ENCODE measurements at regions of chr2 and their contacts with region 1.

Region 1: DNA sequence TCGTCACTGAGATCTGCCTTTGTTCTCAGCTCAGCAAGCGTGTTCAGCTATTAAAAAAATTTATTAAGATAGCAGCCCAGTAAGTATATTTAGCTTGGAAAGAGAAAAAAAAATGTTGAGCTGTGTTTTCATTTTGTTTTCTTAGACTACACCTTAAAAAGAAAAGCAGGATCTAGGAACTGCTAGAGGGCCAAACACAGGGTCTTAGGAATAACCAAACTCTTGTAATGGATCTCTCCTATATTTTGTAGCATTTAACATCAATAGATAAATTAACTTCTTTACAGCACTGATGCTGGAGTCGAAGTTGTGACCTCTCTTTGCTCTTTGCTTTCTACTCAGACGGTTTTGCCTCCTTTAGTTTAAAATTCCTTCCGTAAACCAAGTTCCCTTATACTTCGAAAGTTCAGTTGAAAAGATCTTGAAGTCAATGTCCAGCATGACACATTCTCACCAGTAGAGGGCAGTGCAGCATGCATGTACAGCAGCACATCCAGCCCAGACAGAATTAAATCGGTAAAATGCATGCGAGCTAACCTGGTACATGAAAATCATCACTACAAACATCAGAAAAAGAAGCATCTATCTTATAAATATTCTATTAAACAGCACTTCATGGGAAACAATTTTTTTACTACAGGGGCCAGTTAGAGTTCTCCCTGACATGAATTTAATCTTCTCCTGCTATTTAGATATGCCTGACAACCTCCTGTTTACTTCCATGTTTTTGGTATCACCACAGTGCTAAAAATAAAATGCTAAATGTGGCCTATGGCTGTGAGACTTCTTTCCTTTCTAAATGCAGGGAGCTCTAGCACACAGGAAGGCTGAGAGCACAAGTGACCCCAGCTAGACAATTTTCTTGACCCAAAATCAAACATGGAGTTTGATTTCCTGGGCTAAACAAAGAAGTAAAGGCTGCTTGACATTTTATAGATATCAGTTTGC is 48.2 kb upstream of the MAP3K20 start:
- DNase-seq: peak; percentile 70
- H3K4me3 ChIP-seq: peak overlapping the region in 1 of 2 experiments; percentile 12; a peak in 1 of 4 replicates
- H3K27ac ChIP-seq: peak overlapping the region in 1 of 2 experiments; percentile 14; a peak in 2 of 4 replicates
- H3K4me1 ChIP-seq: peaks cover 2 to 6% of the 10 kb centered on the region in 2 experiments; a peak in 2 of 4 replicates
- H3K27me3 ChIP-seq: no peaks in the 10 kb centered on the region
- CTCF ChIP-seq: peak; percentile 98
- EP300 ChIP-seq: no peak
- RAD21 ChIP-seq: peak; percentile 98

Region 2: GRCh38 chr2:172285010-172285621 is 742.3 kb before region 1 on chr2:
- CTCF ChIA-PET with region 1: no interaction called
- POLR2A ChIA-PET with region 1: no interaction called
- DNase-seq: no peak
- H3K4me3 ChIP-seq: no peak overlapping the region
- H3K27ac ChIP-seq: peak overlapping the region in 1 of 2 experiments; percentile 98; a peak in 2 of 4 replicates
- H3K4me1 ChIP-seq: peaks cover 0 to 36% of the 10 kb centered on the region in 2 experiments
- H3K27me3 ChIP-seq: no peaks in the 10 kb centered on the region
- CTCF ChIP-seq: no peak
- EP300 ChIP-seq: no peak
- RAD21 ChIP-seq: no peak

Region 3: DNA sequence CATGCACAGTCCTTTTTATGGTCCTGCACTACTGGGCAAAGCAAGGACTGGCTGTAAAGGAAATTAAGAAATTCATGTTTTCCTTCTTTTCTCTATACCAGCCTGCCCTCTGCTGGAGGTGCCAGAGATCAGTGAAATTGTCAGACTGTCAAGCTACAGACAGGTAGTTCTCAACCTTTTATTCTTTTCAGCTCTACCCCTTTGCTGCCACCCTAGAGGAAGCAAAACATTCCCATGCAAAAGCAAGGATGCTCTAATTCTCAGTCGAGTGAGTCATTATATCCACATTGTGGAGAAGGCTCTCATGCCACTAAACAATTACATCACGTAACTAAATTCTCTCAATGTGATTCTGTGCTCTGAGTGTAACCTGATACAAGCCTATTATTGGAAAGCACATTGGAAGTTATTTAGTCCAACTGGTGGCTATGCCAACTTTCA is 316.9 kb before region 1 on chr2:
- CTCF ChIA-PET with region 1: no interaction called
- POLR2A ChIA-PET with region 1: no interaction called
- DNase-seq: peak; percentile 67
- H3K4me3 ChIP-seq: peak overlapping the region in 1 of 2 experiments; percentile 31; a peak in 1 of 4 replicates
- H3K27ac ChIP-seq: peak overlapping the region in 1 of 2 experiments; percentile 55; a peak in 1 of 4 replicates
- H3K4me1 ChIP-seq: peaks cover 0 to 4% of the 10 kb centered on the region in 2 experiments; a peak in 2 of 4 replicates
- H3K27me3 ChIP-seq: no peaks in the 10 kb centered on the region
- CTCF ChIP-seq: peak; percentile 84
- EP300 ChIP-seq: no peak
- RAD21 ChIP-seq: peak; percentile 88

Region 4: GRCh38 chr2:172813314-172813888 is 214.1 kb before region 1 on chr2:
- CTCF ChIA-PET with region 1: interaction called, 41 read pairs
- POLR2A ChIA-PET with region 1: no interaction called
- DNase-seq: peak; percentile 33
- H3K4me3 ChIP-seq: no peak overlapping the region
- H3K27ac ChIP-seq: peak overlapping the region in 1 of 2 experiments; percentile 89; a peak in 2 of 4 replicates
- H3K4me1 ChIP-seq: peaks cover 0 to 32% of the 10 kb centered on the region in 2 experiments; a peak in 2 of 4 replicates
- H3K27me3 ChIP-seq: no peaks in the 10 kb centered on the region
- CTCF ChIP-seq: peak; percentile 63
- EP300 ChIP-seq: 0 out of 4 replicates have a peak, but pooled peaks of 1 of the 2 experiments have one; percentile 5
- RAD21 ChIP-seq: peak; percentile 92

Region 5: GRCh38 chr2:173010233-173010632 is 17.2 kb before region 1 on chr2:
- CTCF ChIA-PET with region 1: interaction called, 30 read pairs
- POLR2A ChIA-PET with region 1: no interaction called
- DNase-seq: no peak
- H3K4me3 ChIP-seq: no peak overlapping the region
- H3K27ac ChIP-seq: no peak overlapping the region
- H3K4me1 ChIP-seq: no peaks in the 10 kb centered on the region
- H3K27me3 ChIP-seq: no peaks in the 10 kb centered on the region
- CTCF ChIP-seq: no peak
- EP300 ChIP-seq: no peak
- RAD21 ChIP-seq: no peak

Region 6: GRCh38 chr2:173075781-173076580 is 48.5 kb after region 1 on chr2 and contains the start of gene MAP3K20:
- CTCF ChIA-PET with region 1: interaction called, 15 read pairs
- POLR2A ChIA-PET with region 1: no interaction called
- DNase-seq: peak; percentile 86
- H3K4me3 ChIP-seq: peak within 1 kb of the TSS; percentile 85
- H3K27ac ChIP-seq: peak within 1 kb of the TSS; percentile 85 to 88
- H3K4me1 ChIP-seq: peaks cover 3 to 4% of the 10 kb centered on the region in 2 experiments; a peak in 3 of 4 replicates
- H3K27me3 ChIP-seq: no peaks in the 10 kb centered on the region
- CTCF ChIP-seq: peak; percentile 47
- EP300 ChIP-seq: no peak
- RAD21 ChIP-seq: peak; percentile 42
- polyA plus RNA-seq, gene MAP3K20: 8.5 and 12.2 TPM in 2 replicates

Region 7: DNA sequence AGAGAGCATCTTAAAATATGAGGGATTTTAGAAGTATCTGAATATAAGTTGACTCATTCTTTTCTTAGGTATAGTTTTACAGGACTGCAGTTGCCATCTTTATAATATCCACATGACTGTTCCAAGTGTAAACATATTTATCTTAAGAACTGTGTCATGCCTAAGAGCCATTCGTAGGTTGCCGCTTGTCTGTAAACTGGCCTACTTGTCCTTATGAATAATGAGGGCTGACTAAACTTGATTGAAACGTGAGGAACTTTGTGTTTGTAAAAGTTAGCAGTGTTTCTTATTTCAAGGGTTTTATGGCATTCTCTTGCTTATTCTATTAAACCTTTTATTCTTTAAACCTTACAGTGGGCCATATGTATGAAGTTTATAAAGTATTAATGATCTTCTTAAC is 147.8 kb after region 1 on chr2:
- CTCF ChIA-PET with region 1: no interaction called
- POLR2A ChIA-PET with region 1: no interaction called
- DNase-seq: no peak
- H3K4me3 ChIP-seq: no peak overlapping the region
- H3K27ac ChIP-seq: no peak overlapping the region
- H3K4me1 ChIP-seq: peaks cover 0 to 16% of the 10 kb centered on the region in 2 experiments; a peak in 1 of 4 replicates
- H3K27me3 ChIP-seq: no peaks in the 10 kb centered on the region
- CTCF ChIP-seq: no peak
- EP300 ChIP-seq: no peak
- RAD21 ChIP-seq: no peak

Region 8: DNA sequence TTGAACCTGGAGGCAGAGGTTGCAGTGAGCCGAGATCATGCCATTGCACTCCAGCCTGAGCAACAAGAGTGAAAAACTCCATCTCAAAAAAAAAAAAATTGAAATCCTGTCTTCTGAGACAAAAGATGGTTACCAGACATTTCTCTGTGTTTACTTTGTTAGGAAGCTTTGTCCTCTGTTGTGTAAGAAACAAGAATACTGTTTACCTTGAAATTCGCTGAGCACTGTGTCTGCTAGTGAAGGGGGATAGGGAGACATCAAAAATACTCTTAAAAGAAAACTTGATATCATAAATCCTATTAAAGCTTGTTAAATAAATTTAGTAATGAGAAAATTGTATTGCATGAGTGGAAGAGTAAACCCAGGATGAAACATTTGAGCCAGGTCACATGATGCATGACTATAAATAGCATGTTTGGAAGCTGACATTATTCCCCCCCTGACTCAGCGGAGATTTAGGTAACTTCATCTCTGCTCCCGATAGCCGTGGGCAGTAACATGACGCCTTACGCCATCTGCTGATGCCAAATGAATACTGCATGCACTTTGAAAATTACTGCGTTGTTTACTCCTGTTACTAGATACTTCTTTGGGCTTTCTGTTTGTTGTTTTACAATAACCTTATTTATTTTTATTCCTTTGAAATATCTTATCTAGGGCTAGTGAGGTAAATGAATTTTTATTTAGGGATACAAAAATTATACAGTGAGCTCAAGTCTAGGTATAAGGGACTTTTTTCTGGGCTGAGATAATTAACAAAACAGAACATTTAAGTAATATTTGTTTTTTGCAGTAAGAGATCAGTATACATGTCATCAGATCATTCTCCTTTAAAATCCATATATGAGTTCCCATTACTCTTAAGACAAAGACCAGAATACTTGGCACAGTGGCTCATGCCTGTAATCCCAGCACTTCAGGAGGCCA is 183.1 kb after region 1 on chr2:
- CTCF ChIA-PET with region 1: interaction called, 256 read pairs
- POLR2A ChIA-PET with region 1: no interaction called
- DNase-seq: peak; percentile 70
- H3K4me3 ChIP-seq: no peak overlapping the region
- H3K27ac ChIP-seq: peak overlapping the region in 1 of 2 experiments; percentile 58; a peak in 2 of 4 replicates
- H3K4me1 ChIP-seq: peaks cover 0 to 5% of the 10 kb centered on the region in 2 experiments; a peak in 1 of 4 replicates
- H3K27me3 ChIP-seq: no peaks in the 10 kb centered on the region
- CTCF ChIP-seq: peak; percentile 98
- EP300 ChIP-seq: 0 out of 4 replicates have a peak, but pooled peaks have one; percentile 6 to 19
- RAD21 ChIP-seq: peak; percentile 94

Region 9: DNA sequence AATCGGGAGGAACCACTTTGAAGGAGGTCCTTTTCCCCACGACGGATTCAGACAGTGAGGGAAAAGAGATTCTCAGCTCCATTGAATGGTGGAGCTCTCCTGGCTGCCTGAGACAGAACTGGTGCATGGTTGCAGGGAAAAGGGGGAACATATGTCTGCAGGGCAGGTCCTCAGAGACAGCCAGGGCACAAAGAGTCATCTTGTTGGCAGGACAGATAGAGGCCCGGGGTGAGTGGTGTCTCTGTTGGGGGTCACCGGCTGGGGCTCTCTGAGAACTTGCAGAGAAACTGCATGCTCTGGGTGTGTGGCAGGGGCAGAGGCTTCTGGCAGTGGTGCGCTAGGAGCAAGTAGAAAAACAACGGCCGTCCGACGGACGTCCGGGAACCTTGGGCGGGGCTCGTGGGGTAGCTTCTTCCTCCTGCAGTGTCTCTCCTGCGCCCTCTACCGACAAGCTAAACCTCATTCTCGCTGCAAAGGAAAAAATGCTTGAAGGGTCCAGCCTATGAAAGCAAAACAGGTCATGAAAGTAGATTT is 421.6 kb after region 1 on chr2:
- CTCF ChIA-PET with region 1: interaction called, 10 read pairs
- POLR2A ChIA-PET with region 1: no interaction called
- DNase-seq: peak; percentile 77
- H3K4me3 ChIP-seq: peak overlapping the region; percentile 43 to 55
- H3K27ac ChIP-seq: peak overlapping the region in 1 of 2 experiments; percentile 73; a peak in 2 of 4 replicates
- H3K4me1 ChIP-seq: peaks cover 0 to 3% of the 10 kb centered on the region in 2 experiments; a peak in 1 of 4 replicates
- H3K27me3 ChIP-seq: no peaks in the 10 kb centered on the region
- CTCF ChIP-seq: peak; percentile 73
- EP300 ChIP-seq: no peak
- RAD21 ChIP-seq: peak; percentile 72